ENCODE measurements at regions of chr1 and their contacts with region 1.

Region 1: DNA sequence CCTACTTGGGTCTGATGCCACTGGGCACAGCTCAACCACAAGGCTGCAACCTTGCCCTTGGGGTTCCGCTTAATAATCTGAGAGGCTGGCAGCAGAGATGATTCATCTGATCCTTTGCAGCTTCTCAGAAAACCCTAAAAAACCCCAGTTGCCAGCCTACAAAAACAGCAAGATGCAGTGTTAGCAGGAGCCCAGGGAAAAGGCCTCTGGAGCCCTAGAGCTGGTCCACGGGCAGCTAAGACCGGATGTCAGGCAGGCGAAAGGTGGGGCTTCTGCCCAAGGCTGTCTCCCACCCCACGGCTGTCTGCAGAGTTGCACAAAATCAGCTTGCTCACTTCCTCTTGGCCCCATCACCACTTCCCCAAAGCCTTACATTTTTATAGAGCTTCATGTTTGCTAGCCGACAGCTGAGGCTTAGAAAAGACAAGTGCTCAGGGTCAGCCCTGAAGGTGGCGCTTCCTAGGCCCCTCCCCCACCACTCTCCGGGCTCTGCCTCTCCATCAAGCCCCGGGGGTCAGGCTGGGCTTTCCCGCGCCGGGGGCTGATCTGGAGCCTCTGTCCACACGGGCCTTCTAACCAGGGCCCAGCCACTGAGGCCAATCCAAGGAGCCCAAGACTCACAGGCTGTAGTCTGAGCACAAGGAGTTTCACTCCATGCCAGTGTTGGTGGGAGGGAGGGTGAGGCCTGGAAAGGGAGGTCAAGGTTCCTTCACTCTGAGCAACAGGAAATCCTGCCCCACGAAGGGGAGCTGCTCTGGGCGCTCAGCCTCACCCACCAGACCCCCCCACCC is 4.2 kb upstream of the ADORA3 start:
- DNase-seq: peak; percentile 66
- ATAC-seq: peak; percentile 67
- H3K4me3 Mint-ChIP-seq: peak overlapping the region; percentile 77
- H3K27ac Mint-ChIP-seq: no peak overlapping the region
- H3K4me1 Mint-ChIP-seq: peaks cover 67% of the 10 kb centered on the region
- H3K27me3 Mint-ChIP-seq: no peaks in the 10 kb centered on the region
- CTCF ChIP-seq: no peak

Region 2: DNA sequence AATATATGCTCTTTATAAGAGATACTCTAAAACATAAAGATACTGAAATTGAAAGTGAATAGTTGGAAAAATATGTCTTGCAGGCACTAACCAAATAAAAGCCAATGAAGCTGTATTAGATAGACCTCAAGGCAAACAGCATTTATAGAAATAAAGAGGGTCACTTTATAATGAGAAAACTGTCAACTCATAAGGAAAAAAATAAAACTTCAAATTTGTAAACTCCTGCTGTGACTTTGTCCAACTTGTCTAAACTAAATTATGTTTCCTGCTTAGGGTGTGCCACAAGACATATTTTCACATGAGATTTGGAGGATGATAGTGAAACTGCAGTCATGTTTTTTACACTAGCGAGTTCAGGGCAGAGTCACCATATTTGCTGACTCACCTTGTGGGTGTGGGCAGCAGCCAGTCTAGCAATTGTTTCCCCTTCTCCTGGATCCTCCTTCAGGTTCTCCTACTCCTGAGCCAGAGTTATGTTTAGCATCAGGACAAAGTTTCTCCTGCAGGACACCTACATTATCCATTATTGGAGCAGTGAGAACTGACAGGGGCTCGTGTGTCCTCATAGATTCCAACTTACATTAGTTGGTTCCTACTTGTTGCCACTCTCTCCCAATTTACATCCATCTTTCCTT is 590.8 kb before region 1 on chr1:
- CTCF ChIA-PET with region 1: no interaction called
- POLR2A ChIA-PET with region 1: no interaction called
- intact Hi-C with region 1: no loop called
- DNase-seq: no peak
- ATAC-seq: no peak
- H3K4me3 Mint-ChIP-seq: no peak overlapping the region
- H3K27ac Mint-ChIP-seq: no peak overlapping the region
- H3K4me1 Mint-ChIP-seq: peaks cover 6% of the 10 kb centered on the region
- H3K27me3 Mint-ChIP-seq: no peaks in the 10 kb centered on the region
- CTCF ChIP-seq: no peak

Region 3: GRCh38 chr1:111471012-111471411 is 36.6 kb before region 1 on chr1:
- CTCF ChIA-PET with region 1: interaction called, 123 read pairs
- POLR2A ChIA-PET with region 1: interaction called, 234 read pairs
- intact Hi-C with region 1: loop called (anchors 1 kb)
- DNase-seq: peak; percentile 45
- ATAC-seq: peak; percentile 92
- H3K4me3 Mint-ChIP-seq: no peak overlapping the region
- H3K27ac Mint-ChIP-seq: no peak overlapping the region
- H3K4me1 Mint-ChIP-seq: peaks cover 29% of the 10 kb centered on the region
- H3K27me3 Mint-ChIP-seq: no peaks in the 10 kb centered on the region
- CTCF ChIP-seq: no peak

Region 4: GRCh38 chr1:111592389-111593361 is 85.1 kb after region 1 on chr1:
- CTCF ChIA-PET with region 1: interaction called, 41 read pairs
- POLR2A ChIA-PET with region 1: interaction called, 37 read pairs
- intact Hi-C with region 1: loop called (anchors 1 kb)
- DNase-seq: peak; percentile 58
- ATAC-seq: peak; percentile 93
- H3K4me3 Mint-ChIP-seq: peak overlapping the region; percentile 64
- H3K27ac Mint-ChIP-seq: peak overlapping the region; percentile 90
- H3K4me1 Mint-ChIP-seq: peaks cover 55% of the 10 kb centered on the region
- H3K27me3 Mint-ChIP-seq: no peaks in the 10 kb centered on the region
- CTCF ChIP-seq: no peak

Region 5: GRCh38 chr1:111648806-111649205 is 141.2 kb after region 1 on chr1:
- CTCF ChIA-PET with region 1: interaction called, 17 read pairs
- POLR2A ChIA-PET with region 1: interaction called, 4 read pairs
- intact Hi-C with region 1: no loop called
- DNase-seq: no peak
- ATAC-seq: no peak
- H3K4me3 Mint-ChIP-seq: no peak overlapping the region
- H3K27ac Mint-ChIP-seq: no peak overlapping the region
- H3K4me1 Mint-ChIP-seq: peaks cover 68% of the 10 kb centered on the region
- H3K27me3 Mint-ChIP-seq: no peaks in the 10 kb centered on the region
- CTCF ChIP-seq: no peak

Region 6: DNA sequence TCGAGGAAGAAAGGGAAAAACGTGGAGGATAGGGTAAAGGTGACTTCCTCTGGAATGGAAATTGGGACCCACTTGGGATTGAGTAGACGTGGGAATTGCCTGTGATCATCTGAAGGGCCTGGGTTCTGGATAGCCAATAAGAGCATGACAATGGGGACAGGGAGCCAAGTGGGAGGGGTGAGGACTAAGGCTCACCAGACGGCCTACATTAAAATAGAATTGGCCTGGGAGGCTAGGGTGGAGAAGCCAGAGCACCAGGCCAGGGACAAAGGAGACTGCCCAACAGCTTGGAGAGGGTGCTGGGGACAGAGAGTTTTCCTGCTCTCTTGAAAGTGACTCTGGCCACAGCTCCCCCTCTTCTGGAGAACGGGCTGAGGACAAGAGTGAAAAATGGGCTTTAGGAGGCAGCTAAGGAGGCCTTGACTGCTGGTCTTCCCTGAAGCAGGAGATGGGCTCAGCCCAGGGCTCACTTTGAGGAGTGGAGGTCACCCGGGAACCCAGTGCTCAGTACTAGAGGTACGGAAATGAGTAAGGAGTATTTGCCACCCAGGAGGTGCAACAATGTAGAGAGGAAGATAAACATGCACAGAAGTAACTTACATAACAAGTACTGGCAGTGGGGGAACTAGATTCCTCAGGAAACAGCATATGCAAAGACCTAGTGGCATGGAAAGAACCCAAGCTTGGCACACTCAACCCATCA is 212.8 kb after region 1 on chr1:
- CTCF ChIA-PET with region 1: interaction called, 54 read pairs
- POLR2A ChIA-PET with region 1: interaction called, 3 read pairs
- intact Hi-C with region 1: loop called (anchors 1 kb)
- DNase-seq: no peak
- ATAC-seq: no peak
- H3K4me3 Mint-ChIP-seq: no peak overlapping the region
- H3K27ac Mint-ChIP-seq: no peak overlapping the region
- H3K4me1 Mint-ChIP-seq: peaks cover 21% of the 10 kb centered on the region
- H3K27me3 Mint-ChIP-seq: no peaks in the 10 kb centered on the region
- CTCF ChIP-seq: no peak

Region 7: GRCh38 chr1:111769517-111770146 is 262.0 kb after region 1 on chr1:
- CTCF ChIA-PET with region 1: interaction called, 19 read pairs
- POLR2A ChIA-PET with region 1: interaction called, 5 read pairs
- intact Hi-C with region 1: no loop called
- DNase-seq: no peak
- ATAC-seq: peak; percentile 58
- H3K4me3 Mint-ChIP-seq: no peak overlapping the region
- H3K27ac Mint-ChIP-seq: no peak overlapping the region
- H3K4me1 Mint-ChIP-seq: no peaks in the 10 kb centered on the region
- H3K27me3 Mint-ChIP-seq: no peaks in the 10 kb centered on the region
- CTCF ChIP-seq: no peak

Measured in activated B cell treated with CpG ODN at 0.5 μM for 24 hours (primary cell).